Kidney (tissue), 22 donors: ENCODE measurements at regions of chr1 and their contacts with region 1.

Region 1: DNA sequence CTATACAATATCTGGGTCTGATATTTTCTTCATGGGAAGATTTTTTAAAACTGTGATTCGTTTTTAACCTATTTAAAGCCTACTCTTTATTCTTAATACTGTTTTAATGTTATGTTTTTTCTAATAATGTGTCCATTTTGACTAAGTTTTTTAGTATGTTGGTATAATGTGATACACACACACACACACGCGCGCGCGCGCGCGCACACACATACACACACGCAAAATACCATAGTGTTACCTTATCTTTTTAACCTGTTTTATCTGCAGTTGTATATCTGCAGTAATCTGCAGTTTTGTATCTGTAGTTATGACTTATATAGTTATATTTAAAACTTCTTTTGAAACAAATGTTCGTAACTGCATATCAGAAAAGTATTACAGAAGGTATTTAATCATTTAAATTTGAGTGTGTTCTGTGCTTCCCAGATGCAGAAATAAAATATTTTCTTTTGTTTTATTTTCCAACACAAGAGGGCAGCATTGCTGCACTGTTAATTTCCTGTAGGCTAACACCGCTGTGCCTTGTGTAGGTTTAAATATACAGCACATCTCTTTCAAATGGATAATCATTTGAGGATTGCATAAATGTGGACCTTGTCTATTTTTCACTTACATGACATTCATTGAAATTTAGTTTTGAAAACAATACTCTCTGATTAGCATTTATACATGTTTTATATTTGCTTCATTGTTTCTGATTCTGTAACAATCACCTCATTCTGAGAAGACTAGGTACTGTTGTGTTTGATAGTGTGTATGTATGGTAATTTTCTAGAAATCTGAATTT is 166.1 kb downstream of the PDE4B start:
- DNase-seq: peak in 2 of 5 donors; percentile 68 to 81
- H3K4me3 ChIP-seq: no peak overlapping the region
- H3K27ac ChIP-seq: no peak overlapping the region
- H3K4me1 ChIP-seq: peaks cover 0 to 2% (median 0%) of the 10 kb centered on the region in 3 donors
- H3K27me3 ChIP-seq: no peaks in the 10 kb centered on the region
- CTCF ChIP-seq: peak; percentile 67

Region 2: GRCh38 chr1:66242646-66243547 is 284.1 kb after region 1 on chr1:
- intact Hi-C with region 1: loop called (anchors 5 kb)
- DNase-seq: peak; percentile 87 to 94 (median 91)
- H3K4me3 ChIP-seq: no peak overlapping the region
- H3K27ac ChIP-seq: no peak overlapping the region
- H3K4me1 ChIP-seq: no peaks in the 10 kb centered on the region
- H3K27me3 ChIP-seq: no peaks in the 10 kb centered on the region
- CTCF ChIP-seq: peak; percentile 99

Region 3: GRCh38 chr1:66446261-66447001 is 487.7 kb after region 1 on chr1:
- intact Hi-C with region 1: loop called (anchors 5 kb)
- DNase-seq: peak in 3 of 5 donors; percentile 19 to 87 (median 85)
- H3K4me3 ChIP-seq: no peak overlapping the region
- H3K27ac ChIP-seq: no peak overlapping the region
- H3K4me1 ChIP-seq: no peaks in the 10 kb centered on the region
- H3K27me3 ChIP-seq: no peaks in the 10 kb centered on the region
- CTCF ChIP-seq: peak; percentile 90